ENCODE measurements at regions of chr9 and their contacts with region 1.

Region 1: DNA sequence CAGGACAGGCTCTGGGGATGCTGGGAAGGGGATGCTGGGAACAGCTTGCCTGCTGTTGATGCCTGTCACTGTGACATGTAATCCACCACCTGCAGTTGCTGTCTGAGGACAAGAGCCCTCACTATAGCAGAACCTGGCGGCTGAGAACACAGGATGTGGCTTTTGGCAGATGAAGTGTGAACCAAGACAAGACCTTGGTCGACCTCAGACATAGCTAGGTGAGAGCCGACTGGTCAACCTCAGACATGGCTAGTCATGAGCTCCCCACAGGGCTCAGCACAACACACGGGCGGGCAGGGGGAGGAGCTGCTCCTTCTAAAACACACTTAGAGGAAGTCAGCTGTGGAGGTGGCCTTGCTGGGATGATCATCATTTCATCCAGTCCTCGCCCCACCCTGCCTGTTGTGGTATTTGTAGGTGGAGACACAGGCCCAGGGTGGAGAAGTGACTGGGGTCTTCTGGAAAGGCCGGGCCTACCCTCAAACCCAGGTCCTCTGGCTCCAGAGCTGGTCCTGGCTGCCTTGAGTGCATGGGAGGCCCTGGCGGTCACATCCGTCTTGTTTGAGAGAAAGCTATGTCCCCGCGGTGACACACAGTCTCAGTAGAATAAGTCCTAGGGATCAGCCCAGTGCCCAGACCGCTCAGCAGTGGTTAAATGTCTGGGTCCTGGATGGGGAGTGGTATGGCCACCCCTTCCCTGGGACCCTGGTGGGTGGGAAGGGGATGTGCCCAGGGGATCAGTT is 6.1 kb downstream of the SUSD3 start:
- DNase-seq: peak; percentile 98
- H3K4me3 ChIP-seq: peak overlapping the region; percentile 79
- H3K27ac ChIP-seq: peak overlapping the region; percentile 95
- H3K4me1 ChIP-seq: peaks cover 61% of the 10 kb centered on the region
- CTCF ChIP-seq: no peak

Region 2: GRCh38 chr9:92723299-92723625 is 341.3 kb before region 1 on chr9:
- CTCF ChIA-PET with region 1: no interaction called
- POLR2A ChIA-PET with region 1: no interaction called
- intact Hi-C with region 1: loop called (anchors 2 kb)
- DNase-seq: no peak
- H3K4me3 ChIP-seq: peak overlapping the region; percentile 56
- H3K27ac ChIP-seq: peak overlapping the region; percentile 96
- H3K4me1 ChIP-seq: peaks cover 100% of the 10 kb centered on the region
- CTCF ChIP-seq: no peak

Region 3: DNA sequence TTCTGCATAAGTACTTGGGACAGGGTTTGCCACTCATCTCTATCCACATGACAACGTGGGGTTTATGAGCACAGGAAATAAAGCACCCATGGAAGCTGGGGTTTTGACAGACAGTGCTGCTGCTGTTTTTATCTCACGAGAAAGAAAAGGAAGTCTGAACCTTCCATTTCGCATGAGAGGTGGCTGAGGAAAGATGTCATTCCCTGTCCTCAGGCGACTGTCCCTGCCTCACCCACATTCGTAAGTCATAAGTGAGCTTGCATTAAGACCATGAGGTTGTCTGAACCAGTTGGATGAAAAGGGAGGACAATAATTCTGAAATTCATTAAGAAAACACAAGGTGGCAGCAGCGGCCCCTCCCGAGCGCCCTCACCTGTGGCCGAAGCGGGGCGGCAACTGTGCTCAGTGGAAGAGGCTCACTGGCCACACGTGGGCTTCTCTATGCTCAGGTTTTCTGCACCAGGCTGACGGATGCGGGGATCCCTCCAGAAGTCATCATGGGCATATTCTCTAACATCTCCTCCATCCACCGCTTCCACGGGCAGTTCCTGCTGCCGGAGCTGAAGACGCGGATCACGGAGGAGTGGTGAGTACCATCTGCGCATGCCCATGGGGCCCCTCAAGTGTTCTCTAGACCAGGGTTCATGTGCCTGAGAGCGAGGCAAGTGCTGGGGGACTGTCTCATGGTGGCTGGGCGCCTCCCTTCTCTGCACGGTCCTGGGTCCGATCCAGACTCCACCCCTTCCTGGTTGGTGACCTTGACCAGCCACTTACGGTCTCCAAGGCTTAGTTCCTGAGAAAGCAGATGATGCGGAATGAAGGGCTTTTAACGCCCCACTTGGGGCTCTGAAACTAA is 60.8 kb before region 1 on chr9:
- CTCF ChIA-PET with region 1: interaction called, 3 read pairs
- POLR2A ChIA-PET with region 1: interaction called, 4 read pairs
- intact Hi-C with region 1: loop called (anchors 1 kb)
- DNase-seq: peak; percentile 77
- H3K4me3 ChIP-seq: no peak overlapping the region
- H3K27ac ChIP-seq: no peak overlapping the region
- H3K4me1 ChIP-seq: peaks cover 8% of the 10 kb centered on the region
- CTCF ChIP-seq: peak; percentile 88

Region 4: DNA sequence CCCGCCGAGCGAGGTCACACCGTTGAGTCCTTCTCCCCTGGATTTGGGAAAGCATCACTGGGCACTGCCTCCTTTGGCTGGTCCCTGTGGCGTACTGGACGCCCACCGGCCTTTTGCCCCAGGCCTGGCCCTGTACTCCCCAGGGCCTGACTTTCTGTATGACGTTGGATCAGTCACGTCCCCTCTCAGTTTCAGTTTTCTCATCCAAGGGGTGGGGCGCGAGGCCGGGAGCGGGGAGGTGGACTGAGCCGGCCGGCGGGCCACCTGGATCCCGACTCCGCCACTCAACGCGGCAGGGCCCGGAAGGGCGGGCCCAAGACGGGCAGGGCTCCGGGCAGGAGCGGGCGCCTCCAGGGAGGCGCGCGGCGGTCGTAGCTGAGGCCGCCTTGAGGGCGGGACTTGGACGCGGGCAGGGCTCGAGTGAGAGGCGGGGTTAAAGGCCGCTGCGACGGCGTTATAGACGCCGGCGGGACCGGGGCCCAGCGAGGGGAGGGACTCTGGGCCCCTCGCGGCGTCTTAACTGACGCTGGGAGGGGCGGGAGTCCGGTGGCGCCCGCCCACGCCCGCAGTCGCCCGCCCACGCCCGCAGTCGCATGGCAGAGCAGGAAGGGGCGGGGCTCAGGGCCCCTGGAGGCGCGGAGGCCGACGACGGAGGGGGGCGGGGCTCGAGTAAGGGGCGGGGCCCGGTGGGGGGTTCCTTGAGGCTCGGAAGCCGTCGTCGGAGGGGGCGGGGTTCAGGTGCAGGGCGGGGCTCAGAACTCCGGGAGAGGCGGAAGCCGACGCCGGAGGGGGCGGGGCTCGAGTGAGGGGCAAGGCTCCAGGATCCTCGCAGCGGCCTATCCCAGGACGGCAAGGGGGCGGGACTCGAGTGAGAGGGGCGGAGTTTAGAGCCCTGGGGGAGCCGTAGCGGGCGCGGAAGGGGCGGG is 30.9 kb after region 1 on chr9:
- CTCF ChIA-PET with region 1: interaction called, 4 read pairs
- POLR2A ChIA-PET with region 1: interaction called, 13 read pairs
- intact Hi-C with region 1: loop called (anchors 1 kb)
- DNase-seq: peak; percentile 99
- H3K4me3 ChIP-seq: peak overlapping the region; percentile 91
- H3K27ac ChIP-seq: peak overlapping the region; percentile 87
- H3K4me1 ChIP-seq: peaks cover 60% of the 10 kb centered on the region
- CTCF ChIP-seq: no peak

Region 5: GRCh38 chr9:93136011-93136440 is 71.5 kb after region 1 on chr9:
- CTCF ChIA-PET with region 1: no interaction called
- POLR2A ChIA-PET with region 1: interaction called, 3 read pairs
- intact Hi-C with region 1: loop called (anchors 5 kb)
- DNase-seq: no peak
- H3K4me3 ChIP-seq: no peak overlapping the region
- H3K27ac ChIP-seq: no peak overlapping the region
- H3K4me1 ChIP-seq: peaks cover 60% of the 10 kb centered on the region
- CTCF ChIP-seq: no peak

Region 6: GRCh38 chr9:93288891-93289883 is 224.6 kb after region 1 on chr9:
- CTCF ChIA-PET with region 1: no interaction called
- POLR2A ChIA-PET with region 1: no interaction called
- intact Hi-C with region 1: loop called (anchors 2 kb)
- DNase-seq: no peak
- H3K4me3 ChIP-seq: peak overlapping the region; percentile 42
- H3K27ac ChIP-seq: peak overlapping the region; percentile 98
- H3K4me1 ChIP-seq: peaks cover 93% of the 10 kb centered on the region
- CTCF ChIP-seq: no peak

Region 7: DNA sequence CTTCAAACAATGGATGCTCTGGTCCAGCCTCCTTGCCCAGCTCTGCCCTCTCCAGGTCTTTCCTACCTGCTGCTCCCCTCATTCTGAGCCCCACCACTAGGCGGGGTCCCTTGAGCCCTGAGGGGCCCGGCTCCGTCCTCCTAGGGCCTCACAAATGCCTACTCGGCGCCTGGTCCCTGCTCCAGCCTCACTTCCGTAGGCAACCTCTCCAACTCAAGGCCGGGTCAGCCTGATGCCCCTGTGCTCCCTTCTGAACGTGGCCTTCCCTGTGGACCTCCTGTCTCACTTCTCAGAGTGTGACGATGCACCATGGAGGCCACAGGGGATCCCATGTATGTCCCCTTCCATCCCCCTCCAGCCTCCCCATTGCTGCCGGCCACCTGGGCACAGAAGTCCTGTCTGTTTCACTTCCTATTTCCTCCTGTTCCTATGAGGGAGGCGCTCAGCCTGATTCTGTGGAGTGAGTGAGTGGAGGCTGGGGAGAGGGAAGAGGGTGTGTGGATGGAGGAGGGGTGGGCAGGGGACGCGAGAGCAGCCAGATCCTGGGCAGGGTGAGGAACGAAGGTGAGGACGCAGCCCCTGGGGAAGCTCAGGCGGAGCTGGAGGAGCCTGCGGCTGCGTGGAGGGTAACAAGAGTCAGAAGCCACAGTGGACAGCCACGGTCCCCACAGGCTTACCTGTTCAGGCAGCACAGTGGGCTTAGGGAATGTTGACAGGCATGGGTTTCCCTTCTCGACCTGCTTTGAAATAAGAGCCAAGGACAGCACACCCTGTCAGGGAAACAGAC is 259.8 kb after region 1 on chr9:
- CTCF ChIA-PET with region 1: no interaction called
- POLR2A ChIA-PET with region 1: no interaction called
- intact Hi-C with region 1: no loop called
- DNase-seq: no peak
- H3K4me3 ChIP-seq: no peak overlapping the region
- H3K27ac ChIP-seq: no peak overlapping the region
- H3K4me1 ChIP-seq: peaks cover 8% of the 10 kb centered on the region
- CTCF ChIP-seq: no peak

Measured in OCI-LY7 (cell line).